ENCODE measurements at regions of chr7 and their contacts with region 1.

Region 1: DNA sequence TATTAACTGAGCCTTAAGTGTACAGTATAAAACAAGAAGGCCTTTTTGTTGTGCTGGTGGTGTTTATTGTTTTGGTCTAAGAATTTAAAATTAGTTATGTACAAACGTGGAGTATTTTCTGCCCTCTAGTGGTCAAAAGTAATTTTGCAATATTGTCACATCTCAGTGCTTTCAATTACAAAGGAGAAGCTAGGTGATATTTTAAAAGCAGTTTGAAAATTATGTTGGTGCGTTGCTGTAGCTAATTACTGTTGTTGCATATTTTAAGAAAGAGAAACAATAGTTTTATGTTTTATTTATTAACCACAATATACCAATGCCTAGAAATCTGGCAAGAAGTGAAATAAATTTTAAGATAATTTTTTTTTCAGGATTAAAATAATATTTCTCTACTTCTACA is 11.4 kb downstream of the NPVF start:
- DNase-seq: peak; percentile 11
- ATAC-seq: peak; percentile 77
- H3K4me3 ChIP-seq: no peak overlapping the region
- H3K27ac ChIP-seq: no peak overlapping the region
- H3K4me1 ChIP-seq: no peaks in the 10 kb centered on the region
- H3K27me3 ChIP-seq: no peaks in the 10 kb centered on the region; a peak in 2 of 4 replicates
- CTCF ChIP-seq: peak; percentile 62 to 74 (median 63)
- EP300 ChIP-seq: no peak
- POLR2A ChIP-seq: no peak
- RAD21 ChIP-seq: 0 out of 2 replicates have a peak, but pooled peaks have one; percentile 3

Region 2: DNA sequence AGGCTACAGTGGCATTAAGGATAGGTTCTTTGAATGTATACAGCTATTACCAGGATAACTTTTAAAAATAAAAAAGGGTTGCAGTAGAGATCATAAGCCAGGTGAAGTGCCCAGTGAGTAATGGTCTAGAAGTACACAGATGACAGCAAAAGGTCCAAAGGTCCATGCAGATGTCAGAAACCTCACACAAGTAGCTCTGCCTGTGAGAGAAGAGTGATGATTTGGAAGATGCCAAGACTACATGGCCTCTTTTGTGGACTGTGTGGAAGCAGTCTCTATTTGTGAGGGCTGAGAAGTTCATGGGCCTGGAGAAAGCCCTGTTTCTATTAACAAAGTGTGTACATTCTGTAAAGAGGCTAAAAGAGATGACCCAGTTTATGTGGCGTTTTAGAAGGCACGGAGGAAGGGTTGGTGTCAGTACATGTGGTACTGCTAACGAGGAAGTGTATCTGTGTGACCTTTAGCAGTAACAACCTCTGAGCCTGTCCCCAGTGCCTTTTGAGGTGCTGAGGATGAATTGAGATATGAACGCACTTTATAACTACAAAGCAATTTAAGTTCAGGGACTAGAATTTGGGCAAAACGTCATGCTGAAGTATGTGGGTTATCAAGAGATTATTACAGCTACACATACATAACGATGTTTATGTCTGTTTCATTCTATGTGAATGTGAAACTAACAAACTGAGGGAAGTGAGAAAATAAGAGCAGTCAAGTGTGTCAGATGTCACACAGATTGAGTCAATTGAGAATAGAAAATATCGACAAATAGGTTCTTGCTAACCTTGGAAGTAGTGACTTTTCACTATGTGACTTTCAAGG is 99.4 kb before region 1 on chr7:
- CTCF ChIA-PET with region 1: no interaction called
- POLR2A ChIA-PET with region 1: no interaction called
- RAD21 ChIA-PET with region 1: no interaction called
- SMC1A ChIA-PET with region 1: no interaction called
- in situ Hi-C with region 1: no loop called
- intact Hi-C with region 1: no loop called
- DNase-seq: peak; percentile 91
- ATAC-seq: peak; percentile 87
- H3K4me3 ChIP-seq: peak overlapping the region; percentile 45
- H3K27ac ChIP-seq: peak overlapping the region; percentile 90
- H3K4me1 ChIP-seq: peaks cover 43% of the 10 kb centered on the region
- H3K27me3 ChIP-seq: no peaks in the 10 kb centered on the region
- CTCF ChIP-seq: no peak
- EP300 ChIP-seq: peak; percentile 79 to 92
- POLR2A ChIP-seq: peak; percentile 57; the same call in 1 of the 2 replicates
- RAD21 ChIP-seq: no peak

Region 3: GRCh38 chr7:25186436-25186835 is 30.4 kb before region 1 on chr7:
- CTCF ChIA-PET with region 1: interaction called, 10 read pairs
- POLR2A ChIA-PET with region 1: interaction called, 3 read pairs
- RAD21 ChIA-PET with region 1: no interaction called
- SMC1A ChIA-PET with region 1: interaction called, 4 read pairs
- in situ Hi-C with region 1: no loop called
- intact Hi-C with region 1: no loop called
- DNase-seq: no peak
- ATAC-seq: no peak
- H3K4me3 ChIP-seq: no peak overlapping the region
- H3K27ac ChIP-seq: no peak overlapping the region
- H3K4me1 ChIP-seq: no peaks in the 10 kb centered on the region
- H3K27me3 ChIP-seq: no peaks in the 10 kb centered on the region
- CTCF ChIP-seq: no peak
- EP300 ChIP-seq: no peak
- POLR2A ChIP-seq: no peak
- RAD21 ChIP-seq: no peak

Region 4: DNA sequence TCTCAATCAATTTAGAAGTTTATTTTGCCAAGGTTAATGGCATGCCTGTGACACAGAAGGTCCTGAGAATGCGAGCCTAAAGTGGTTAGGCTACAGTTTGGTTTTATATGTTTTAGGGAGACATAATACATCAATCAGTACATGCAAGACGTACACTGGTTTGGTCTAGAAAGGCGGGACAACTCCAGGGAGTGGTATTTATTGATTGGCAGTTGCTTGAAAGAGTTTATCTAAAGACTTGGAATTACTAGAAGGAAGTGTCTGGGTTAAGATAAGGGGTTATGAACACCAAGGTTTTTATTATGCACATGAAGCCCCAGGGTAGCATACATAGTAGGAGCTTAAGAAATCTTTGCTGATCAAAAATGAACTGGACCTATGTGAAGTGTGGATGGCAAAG is 10.1 kb before region 1 on chr7:
- CTCF ChIA-PET with region 1: interaction called, 19 read pairs
- POLR2A ChIA-PET with region 1: no interaction called
- RAD21 ChIA-PET with region 1: no interaction called
- SMC1A ChIA-PET with region 1: no interaction called
- in situ Hi-C with region 1: no loop called
- intact Hi-C with region 1: no loop called
- DNase-seq: no peak
- ATAC-seq: no peak
- H3K4me3 ChIP-seq: no peak overlapping the region
- H3K27ac ChIP-seq: no peak overlapping the region
- H3K4me1 ChIP-seq: no peaks in the 10 kb centered on the region
- H3K27me3 ChIP-seq: peaks cover 0 to 4% of the 10 kb centered on the region in 2 experiments; a peak in 1 of 4 replicates
- CTCF ChIP-seq: no peak
- EP300 ChIP-seq: no peak
- POLR2A ChIP-seq: no peak
- RAD21 ChIP-seq: no peak

Region 5: GRCh38 chr7:25228386-25228785 is 11.5 kb after region 1 on chr7 and contains the start of gene NPVF:
- CTCF ChIA-PET with region 1: interaction called, 17 read pairs
- POLR2A ChIA-PET with region 1: no interaction called
- RAD21 ChIA-PET with region 1: no interaction called
- SMC1A ChIA-PET with region 1: interaction called, 4 read pairs
- in situ Hi-C with region 1: no loop called
- intact Hi-C with region 1: no loop called
- DNase-seq: no peak
- ATAC-seq: no peak
- H3K4me3 ChIP-seq: no peak within 1 kb of the TSS
- H3K27ac ChIP-seq: no peak within 1 kb of the TSS
- H3K4me1 ChIP-seq: no peaks in the 10 kb centered on the region
- H3K27me3 ChIP-seq: peaks cover 0 to 1% of the 10 kb centered on the region in 2 experiments; a peak in 2 of 4 replicates
- CTCF ChIP-seq: no peak
- EP300 ChIP-seq: no peak
- POLR2A ChIP-seq: no peak
- RAD21 ChIP-seq: no peak
- polyA plus RNA-seq, gene NPVF: not detected

Region 6: DNA sequence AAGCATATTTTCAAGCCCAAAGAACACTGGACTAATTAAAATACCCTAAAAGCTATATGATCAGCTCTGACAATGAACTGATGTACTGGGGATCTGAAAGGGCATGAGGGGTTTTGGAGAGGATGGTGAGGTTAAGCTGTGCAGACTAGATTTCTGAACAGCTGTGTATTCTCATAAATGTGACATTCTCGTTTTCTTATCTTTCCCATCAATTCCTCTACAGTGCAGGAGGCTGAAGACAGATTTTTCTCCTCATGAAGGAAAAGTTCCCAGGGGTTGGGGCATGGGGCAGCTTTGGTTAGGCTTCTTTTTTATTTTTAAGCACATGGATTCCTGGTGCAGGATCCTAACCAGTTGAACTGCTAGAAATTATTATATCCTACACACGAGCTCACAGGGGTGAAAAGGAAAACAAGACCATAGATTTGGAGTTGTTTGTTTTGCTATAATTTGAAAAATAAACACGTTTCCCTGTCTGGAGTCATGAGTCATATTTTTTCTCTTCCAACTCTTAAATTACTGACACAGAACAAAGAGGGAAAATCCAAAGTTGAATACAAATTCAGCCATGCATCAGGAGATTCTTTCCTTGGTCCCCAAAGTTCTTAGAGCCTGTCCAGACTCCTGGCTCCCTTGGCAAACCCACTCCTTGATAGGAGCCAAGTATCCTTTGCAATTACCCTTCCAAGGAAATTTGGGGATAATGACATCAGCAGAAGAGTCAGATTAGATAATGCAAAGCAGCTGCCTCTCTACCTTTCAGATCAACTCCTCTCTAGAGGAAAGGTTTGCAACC is 159.2 kb after region 1 on chr7:
- CTCF ChIA-PET with region 1: no interaction called
- POLR2A ChIA-PET with region 1: no interaction called
- RAD21 ChIA-PET with region 1: no interaction called
- SMC1A ChIA-PET with region 1: no interaction called
- in situ Hi-C with region 1: no loop called
- intact Hi-C with region 1: no loop called
- DNase-seq: no peak
- ATAC-seq: no peak
- H3K4me3 ChIP-seq: no peak overlapping the region
- H3K27ac ChIP-seq: no peak overlapping the region
- H3K4me1 ChIP-seq: no peaks in the 10 kb centered on the region
- H3K27me3 ChIP-seq: no peaks in the 10 kb centered on the region; a peak in 1 of 4 replicates
- CTCF ChIP-seq: no peak
- EP300 ChIP-seq: no peak
- POLR2A ChIP-seq: no peak
- RAD21 ChIP-seq: no peak

Measured in GM12878 (cell line).